B cell (primary cell): ENCODE measurements at regions of chr11 and their contacts with region 1.

Region 1: DNA sequence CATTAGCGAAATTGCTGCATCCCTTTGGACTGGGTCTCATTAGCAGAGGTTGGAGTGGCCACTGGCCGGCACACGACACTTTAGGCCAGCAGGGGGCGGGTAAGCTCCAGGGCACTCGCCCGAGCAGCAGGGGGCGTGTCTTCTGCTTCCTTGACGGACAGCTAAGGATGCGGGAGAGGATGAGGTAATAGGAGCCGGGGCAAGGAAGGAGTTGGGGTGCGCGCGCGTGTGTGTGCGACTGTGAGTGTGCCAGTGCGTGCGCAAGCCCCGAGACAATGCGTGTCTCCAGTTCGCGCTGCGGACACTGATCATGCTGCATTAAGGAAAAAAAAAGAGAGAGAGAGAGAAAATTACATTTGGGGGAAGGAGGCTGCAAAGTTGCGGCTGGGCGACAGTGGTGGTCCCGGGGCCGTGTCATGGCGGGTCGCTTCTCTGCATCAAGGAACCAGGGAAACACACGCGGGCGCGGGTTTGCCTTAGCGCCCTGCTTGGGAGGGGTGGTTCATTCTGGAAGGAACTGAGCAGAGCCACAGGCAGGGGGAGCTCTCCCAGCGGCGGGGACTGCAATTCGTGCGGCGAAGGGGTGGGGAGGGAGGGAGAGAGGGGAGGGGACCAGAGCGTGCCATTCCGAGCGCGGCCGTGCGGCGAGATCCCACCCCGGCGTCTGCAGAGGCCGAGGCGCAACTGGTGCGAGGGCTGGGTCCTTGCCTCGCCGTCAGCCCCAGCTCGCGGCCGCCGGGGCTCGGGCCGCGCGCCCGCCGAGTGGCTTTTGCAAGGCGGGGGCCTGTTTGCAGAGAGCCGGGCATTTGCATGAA is at the start of gene DTX4:
- DNase-seq: peak; percentile 93
- ATAC-seq: peak; percentile 80
- H3K4me3 ChIP-seq: peak within 1 kb of the TSS; percentile 55 to 76 (median 74)
- H3K4me3 Mint-ChIP-seq: peak within 1 kb of the TSS; percentile 98
- H3K27ac ChIP-seq: peak within 1 kb of the TSS; percentile 38 to 60
- H3K27ac Mint-ChIP-seq: peak within 1 kb of the TSS; percentile 92
- H3K4me1 ChIP-seq: peaks cover 20 to 26% of the 10 kb centered on the region in 2 donors
- H3K4me1 Mint-ChIP-seq: peaks cover 28% of the 10 kb centered on the region
- H3K27me3 ChIP-seq: no peaks in the 10 kb centered on the region
- H3K27me3 Mint-ChIP-seq: no peaks in the 10 kb centered on the region
- CTCF ChIP-seq: peak; percentile 96
- total RNA-seq, gene DTX4: 41.0 and 43.3 TPM in 2 replicates

Region 2: DNA sequence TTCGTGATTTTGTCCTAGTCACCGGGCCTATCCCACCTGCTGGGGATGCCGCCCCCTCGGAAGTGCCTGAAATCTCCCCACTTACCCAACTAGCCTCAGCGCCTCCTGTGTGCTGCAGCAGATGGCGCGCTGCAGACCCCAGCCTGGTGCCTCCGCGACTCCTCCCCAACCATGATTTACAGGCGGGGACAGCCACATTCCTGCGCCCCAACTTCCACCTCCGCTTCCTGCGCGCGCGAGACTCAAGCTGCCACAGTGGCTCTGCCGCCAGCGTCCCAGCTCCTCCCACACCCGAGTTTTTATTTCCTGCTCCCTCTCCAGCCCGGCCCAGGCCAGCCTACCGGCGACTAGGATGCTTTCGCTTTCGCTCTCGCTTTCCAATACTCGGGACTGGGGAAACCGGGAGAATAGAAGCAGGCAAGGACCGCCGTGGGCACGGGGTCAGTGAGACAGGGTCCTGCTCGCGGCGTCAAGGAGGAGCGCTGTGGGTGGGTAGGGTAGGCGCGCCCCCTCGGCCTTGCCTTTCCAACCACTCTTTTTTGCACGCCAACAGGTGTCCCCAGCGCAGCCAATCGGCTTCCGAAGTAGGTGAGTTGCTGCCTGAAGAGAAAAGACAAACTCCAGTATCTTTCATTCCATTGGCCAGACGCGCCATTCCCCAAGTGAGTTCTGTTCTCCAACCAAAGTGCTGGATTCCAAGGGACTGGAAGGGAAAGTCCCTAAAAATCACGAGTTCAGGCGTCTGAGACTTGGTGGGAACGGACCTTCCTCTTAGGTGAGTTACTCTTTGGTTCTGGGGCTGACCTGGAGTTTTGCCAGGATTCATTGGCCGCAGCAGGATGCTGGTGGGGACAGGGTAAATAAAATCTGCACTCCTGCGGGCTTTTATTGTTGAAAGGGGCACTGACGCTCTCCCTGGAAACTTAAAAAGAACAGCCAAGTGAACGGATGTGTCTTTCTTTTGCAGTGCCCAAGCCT is 28.9 kb before region 1 on chr11 and contains the start of gene FAM111A:
- CTCF ChIA-PET with region 1: interaction called, 6 read pairs
- POLR2A ChIA-PET with region 1: interaction called, 8 read pairs
- intact Hi-C with region 1: loop called (anchors 1 kb)
- DNase-seq: peak; percentile 91
- ATAC-seq: peak; percentile 74
- H3K4me3 ChIP-seq: peak within 1 kb of the TSS; percentile 82 to 94 (median 89)
- H3K4me3 Mint-ChIP-seq: peak within 1 kb of the TSS; percentile 97
- H3K27ac ChIP-seq: peak within 1 kb of the TSS; percentile 88 to 90
- H3K27ac Mint-ChIP-seq: peak within 1 kb of the TSS; percentile 87
- H3K4me1 ChIP-seq: peaks cover 40 to 45% of the 10 kb centered on the region in 2 donors
- H3K4me1 Mint-ChIP-seq: peaks cover 68% of the 10 kb centered on the region
- H3K27me3 ChIP-seq: no peaks in the 10 kb centered on the region
- H3K27me3 Mint-ChIP-seq: no peaks in the 10 kb centered on the region
- CTCF ChIP-seq: no peak
- total RNA-seq, gene FAM111A: 120 and 126 TPM in 2 replicates

Region 3: DNA sequence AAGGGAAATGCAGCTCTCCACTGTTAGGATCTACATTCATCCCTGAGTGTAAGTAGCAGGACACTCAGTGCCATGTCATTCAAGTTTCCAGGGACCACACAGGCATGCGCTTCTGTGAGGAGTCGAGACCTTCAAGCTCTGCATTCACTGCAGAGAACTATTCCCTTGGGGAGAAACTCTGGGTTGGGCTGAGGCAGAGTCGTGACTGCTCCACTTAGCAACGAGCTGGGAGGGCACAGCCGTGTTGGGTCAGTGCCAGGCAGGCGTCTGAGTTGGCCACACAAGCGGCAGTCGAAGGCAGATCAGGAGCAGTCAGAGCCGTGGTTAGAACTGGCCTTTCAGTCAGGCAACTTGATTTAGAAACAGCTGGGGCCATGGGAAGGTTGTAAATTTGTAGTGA is 26.3 kb after region 1 on chr11:
- CTCF ChIA-PET with region 1: interaction called, 215 read pairs
- POLR2A ChIA-PET with region 1: interaction called, 5 read pairs
- intact Hi-C with region 1: no loop called
- DNase-seq: no peak
- ATAC-seq: no peak
- H3K4me3 ChIP-seq: no peak overlapping the region
- H3K4me3 Mint-ChIP-seq: peak overlapping the region; percentile 23
- H3K27ac ChIP-seq: no peak overlapping the region
- H3K27ac Mint-ChIP-seq: peak overlapping the region; percentile 72
- H3K4me1 ChIP-seq: peaks cover 47 to 50% of the 10 kb centered on the region in 2 donors
- H3K4me1 Mint-ChIP-seq: peaks cover 74% of the 10 kb centered on the region
- H3K27me3 ChIP-seq: no peaks in the 10 kb centered on the region
- H3K27me3 Mint-ChIP-seq: no peaks in the 10 kb centered on the region
- CTCF ChIP-seq: no peak

Region 4: GRCh38 chr11:59224351-59224928 is 52.7 kb after region 1 on chr11:
- CTCF ChIA-PET with region 1: interaction called, 57 read pairs
- POLR2A ChIA-PET with region 1: no interaction called
- intact Hi-C with region 1: no loop called
- DNase-seq: peak; percentile 51
- ATAC-seq: peak; percentile 26
- H3K4me3 ChIP-seq: no peak overlapping the region
- H3K4me3 Mint-ChIP-seq: peak overlapping the region; percentile 4
- H3K27ac ChIP-seq: peak overlapping the region; percentile 46 to 63
- H3K27ac Mint-ChIP-seq: peak overlapping the region; percentile 56
- H3K4me1 ChIP-seq: peaks cover 57% of the 10 kb centered on the region in 2 donors
- H3K4me1 Mint-ChIP-seq: peaks cover 55% of the 10 kb centered on the region
- H3K27me3 ChIP-seq: no peaks in the 10 kb centered on the region
- H3K27me3 Mint-ChIP-seq: no peaks in the 10 kb centered on the region
- CTCF ChIP-seq: no peak

Region 5: DNA sequence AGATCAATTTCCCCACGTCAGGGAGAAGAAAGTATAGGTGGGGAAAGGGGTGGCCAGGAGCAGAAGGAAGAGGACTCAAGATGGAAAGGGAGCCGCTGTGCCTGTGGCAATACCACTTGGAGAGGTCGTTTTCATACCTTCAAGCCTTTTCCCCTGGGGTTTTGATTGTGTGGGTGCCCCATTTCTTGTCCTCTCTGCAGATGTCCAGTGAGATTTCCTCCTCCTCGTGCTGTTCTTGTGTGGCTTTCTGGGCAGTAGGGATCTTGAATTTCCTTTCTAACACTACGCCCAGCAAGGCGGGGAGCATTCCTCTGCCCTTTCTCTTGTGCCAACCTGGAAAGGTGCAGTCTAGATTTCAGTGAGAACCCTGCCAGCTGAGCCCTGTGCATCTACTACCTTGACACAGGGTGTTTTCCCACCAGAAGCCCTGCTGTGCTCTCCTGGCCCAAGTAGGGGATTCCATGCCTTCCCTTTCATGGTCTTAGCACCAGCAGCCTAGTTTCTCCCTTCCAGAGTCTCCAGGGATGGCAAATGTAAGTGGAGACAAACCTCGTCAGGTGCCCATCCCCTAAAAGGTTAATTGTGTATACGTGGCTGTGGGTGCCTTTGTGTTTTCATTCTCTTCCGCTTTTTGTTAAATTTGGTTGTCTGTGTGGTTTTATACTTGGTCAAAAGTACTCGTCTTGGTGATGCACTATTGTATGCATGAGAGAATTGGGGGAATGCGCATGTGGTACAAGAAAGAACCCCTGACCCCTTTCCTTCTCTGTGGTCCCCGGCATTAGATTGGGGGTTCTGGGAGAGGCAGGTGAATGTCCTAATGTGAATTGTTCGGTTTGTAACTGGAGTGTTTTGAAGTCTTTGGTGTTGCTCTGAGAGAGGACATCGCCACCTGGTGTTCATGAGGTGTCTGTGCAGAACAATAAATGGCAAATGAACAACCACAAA is 112.4 kb after region 1 on chr11:
- CTCF ChIA-PET with region 1: interaction called, 18 read pairs
- POLR2A ChIA-PET with region 1: interaction called, 4 read pairs
- intact Hi-C with region 1: loop called (anchors 1 kb)
- DNase-seq: peak; percentile 92
- ATAC-seq: peak; percentile 83
- H3K4me3 ChIP-seq: peak overlapping the region in 4 of 5 experiments; percentile 25 to 49 (median 34)
- H3K4me3 Mint-ChIP-seq: peak overlapping the region; percentile 80
- H3K27ac ChIP-seq: peak overlapping the region; percentile 75 to 89
- H3K27ac Mint-ChIP-seq: peak overlapping the region; percentile 91
- H3K4me1 ChIP-seq: peaks cover 30 to 51% of the 10 kb centered on the region in 2 donors
- H3K4me1 Mint-ChIP-seq: peaks cover 63% of the 10 kb centered on the region
- H3K27me3 ChIP-seq: no peaks in the 10 kb centered on the region
- H3K27me3 Mint-ChIP-seq: no peaks in the 10 kb centered on the region
- CTCF ChIP-seq: peak; percentile 89

Region 6: GRCh38 chr11:59417023-59417422 is 245.3 kb after region 1 on chr11:
- CTCF ChIA-PET with region 1: interaction called, 16 read pairs
- POLR2A ChIA-PET with region 1: no interaction called
- intact Hi-C with region 1: no loop called
- DNase-seq: peak; percentile 46
- ATAC-seq: peak; percentile 67
- H3K4me3 ChIP-seq: peak overlapping the region in 2 of 5 experiments; percentile 25 to 31
- H3K4me3 Mint-ChIP-seq: peak overlapping the region; percentile 68
- H3K27ac ChIP-seq: peak overlapping the region; percentile 16 to 62
- H3K27ac Mint-ChIP-seq: peak overlapping the region; percentile 81
- H3K4me1 ChIP-seq: peaks cover 44% of the 10 kb centered on the region in 2 donors
- H3K4me1 Mint-ChIP-seq: peaks cover 38% of the 10 kb centered on the region
- H3K27me3 ChIP-seq: no peaks in the 10 kb centered on the region
- H3K27me3 Mint-ChIP-seq: no peaks in the 10 kb centered on the region
- CTCF ChIP-seq: no peak

Region 7: DNA sequence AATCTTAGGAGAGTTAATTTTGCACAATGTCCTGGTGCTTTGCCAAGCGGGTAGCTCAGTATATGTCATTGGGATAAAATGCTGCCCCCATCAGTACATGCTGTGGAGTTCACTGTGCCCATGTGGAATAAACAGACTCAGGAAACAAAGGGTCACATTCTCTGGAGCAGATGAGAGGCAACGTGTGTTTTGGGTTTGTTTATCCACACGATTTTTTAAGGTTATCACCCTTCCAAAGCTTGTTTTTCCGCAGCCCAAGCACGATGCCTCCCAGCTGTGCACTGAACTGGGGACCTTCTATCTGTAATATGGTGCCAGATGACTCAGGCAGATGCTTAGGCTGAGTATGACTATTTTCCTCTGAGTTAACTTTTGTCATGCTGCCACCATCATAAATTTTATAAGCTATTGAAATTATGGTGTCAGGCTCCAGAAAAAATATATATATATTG is 291.5 kb after region 1 on chr11:
- CTCF ChIA-PET with region 1: no interaction called
- POLR2A ChIA-PET with region 1: no interaction called
- intact Hi-C with region 1: no loop called
- DNase-seq: no peak
- ATAC-seq: no peak
- H3K4me3 ChIP-seq: no peak overlapping the region
- H3K4me3 Mint-ChIP-seq: no peak overlapping the region
- H3K27ac ChIP-seq: no peak overlapping the region
- H3K27ac Mint-ChIP-seq: no peak overlapping the region
- H3K4me1 ChIP-seq: no peaks in the 10 kb centered on the region
- H3K4me1 Mint-ChIP-seq: no peaks in the 10 kb centered on the region
- H3K27me3 ChIP-seq: peaks cover 0 to 4% (median 0%) of the 10 kb centered on the region in 4 experiments
- H3K27me3 Mint-ChIP-seq: peaks cover 37% of the 10 kb centered on the region
- CTCF ChIP-seq: no peak

Region 8: DNA sequence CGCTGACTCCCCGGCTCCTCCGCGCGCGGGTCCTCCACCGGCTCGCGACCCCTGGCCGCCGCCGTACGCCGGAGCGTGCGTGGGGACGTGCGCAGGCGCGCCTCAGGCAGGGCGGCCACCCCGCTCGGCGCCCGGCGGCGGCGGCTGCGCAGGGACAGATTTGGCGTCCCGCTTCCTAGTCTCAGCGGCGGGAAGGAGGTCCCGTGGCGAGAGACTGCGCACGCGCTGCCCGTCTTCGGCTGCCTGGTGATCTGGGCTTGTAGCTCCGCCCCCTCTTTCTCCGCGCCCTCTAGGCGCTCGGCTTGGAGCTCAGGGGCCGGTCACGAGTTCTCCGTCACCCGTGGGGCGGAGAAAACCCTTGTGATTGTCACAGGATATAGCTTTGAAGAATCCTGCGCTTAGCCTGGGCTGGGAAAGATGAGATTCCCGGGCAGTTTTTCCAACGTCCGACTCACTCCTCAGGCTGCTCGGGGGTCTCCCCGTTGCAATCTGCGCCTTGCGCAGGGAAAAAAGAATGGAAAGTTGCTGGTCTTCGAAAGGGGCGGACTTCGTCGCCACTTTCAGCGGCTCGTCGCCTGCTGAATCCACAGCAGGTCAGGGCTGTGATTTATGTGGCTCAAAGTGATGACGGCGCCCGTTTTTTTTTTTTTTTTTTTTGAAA is 497.4 kb after region 1 on chr11 and contains the start of gene PATL1:
- CTCF ChIA-PET with region 1: no interaction called
- POLR2A ChIA-PET with region 1: no interaction called
- intact Hi-C with region 1: loop called (anchors 10 kb)
- DNase-seq: peak; percentile 100
- ATAC-seq: peak; percentile 89
- H3K4me3 ChIP-seq: peak within 1 kb of the TSS; percentile 81 to 96 (median 93)
- H3K4me3 Mint-ChIP-seq: peak within 1 kb of the TSS; percentile 98
- H3K27ac ChIP-seq: peak within 1 kb of the TSS; percentile 98 to 100
- H3K27ac Mint-ChIP-seq: peak within 1 kb of the TSS; percentile 100
- H3K4me1 ChIP-seq: peaks cover 20% of the 10 kb centered on the region in 2 donors
- H3K4me1 Mint-ChIP-seq: peaks cover 33% of the 10 kb centered on the region
- H3K27me3 ChIP-seq: no peaks in the 10 kb centered on the region
- H3K27me3 Mint-ChIP-seq: no peaks in the 10 kb centered on the region
- CTCF ChIP-seq: peak; percentile 0
- total RNA-seq, gene PATL1: 45.0 and 46.0 TPM in 2 replicates